ENCODE measurements at regions of chr15 and their contacts with region 1.

Region 1: DNA sequence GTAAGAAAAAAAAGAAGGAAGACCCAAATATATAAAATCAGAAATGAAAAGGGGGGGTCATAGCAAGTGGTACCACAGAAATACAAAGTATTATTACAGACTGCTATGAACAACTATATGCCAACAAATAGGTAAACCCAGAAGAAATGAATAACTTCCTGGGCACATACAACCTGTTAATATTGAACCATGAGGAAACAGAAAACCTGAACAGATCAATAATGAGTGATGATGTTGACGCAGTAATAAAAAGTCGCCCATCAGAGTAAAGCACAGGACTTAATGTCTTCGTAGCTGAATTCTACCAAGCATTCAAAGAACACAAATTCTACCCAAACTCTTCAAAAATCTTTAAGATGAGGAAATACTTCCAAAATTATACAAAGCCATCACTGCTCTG is 921.6 kb upstream of the SEMA6D start:
- DNase-seq: no peak
- ATAC-seq: no peak
- H3K4me3 ChIP-seq: no peak overlapping the region
- H3K27ac ChIP-seq: no peak overlapping the region
- H3K4me1 ChIP-seq: no peaks in the 10 kb centered on the region
- H3K27me3 ChIP-seq: no peaks in the 10 kb centered on the region

Region 2: GRCh38 chr15:46714950-46715349 is 80.7 kb before region 1 on chr15:
- intact Hi-C with region 1: loop called in 1 of 4 experiments (anchors 5 kb)
- DNase-seq: no peak
- ATAC-seq: no peak
- H3K4me3 ChIP-seq: no peak overlapping the region
- H3K27ac ChIP-seq: no peak overlapping the region
- H3K4me1 ChIP-seq: no peaks in the 10 kb centered on the region
- H3K27me3 ChIP-seq: no peaks in the 10 kb centered on the region

Measured in right cardiac atrium (tissue), 5 donors.